Activated naive CD4-positive, alpha-beta T cell treated with anti-CD3 and anti-CD28 coated beads, Interleukin-2, amount 10 ng/mL, durations not matched to agents 7 days and 5 days (primary cell): ENCODE measurements at regions of chr1 and their contacts with region 1.

Region 1: DNA sequence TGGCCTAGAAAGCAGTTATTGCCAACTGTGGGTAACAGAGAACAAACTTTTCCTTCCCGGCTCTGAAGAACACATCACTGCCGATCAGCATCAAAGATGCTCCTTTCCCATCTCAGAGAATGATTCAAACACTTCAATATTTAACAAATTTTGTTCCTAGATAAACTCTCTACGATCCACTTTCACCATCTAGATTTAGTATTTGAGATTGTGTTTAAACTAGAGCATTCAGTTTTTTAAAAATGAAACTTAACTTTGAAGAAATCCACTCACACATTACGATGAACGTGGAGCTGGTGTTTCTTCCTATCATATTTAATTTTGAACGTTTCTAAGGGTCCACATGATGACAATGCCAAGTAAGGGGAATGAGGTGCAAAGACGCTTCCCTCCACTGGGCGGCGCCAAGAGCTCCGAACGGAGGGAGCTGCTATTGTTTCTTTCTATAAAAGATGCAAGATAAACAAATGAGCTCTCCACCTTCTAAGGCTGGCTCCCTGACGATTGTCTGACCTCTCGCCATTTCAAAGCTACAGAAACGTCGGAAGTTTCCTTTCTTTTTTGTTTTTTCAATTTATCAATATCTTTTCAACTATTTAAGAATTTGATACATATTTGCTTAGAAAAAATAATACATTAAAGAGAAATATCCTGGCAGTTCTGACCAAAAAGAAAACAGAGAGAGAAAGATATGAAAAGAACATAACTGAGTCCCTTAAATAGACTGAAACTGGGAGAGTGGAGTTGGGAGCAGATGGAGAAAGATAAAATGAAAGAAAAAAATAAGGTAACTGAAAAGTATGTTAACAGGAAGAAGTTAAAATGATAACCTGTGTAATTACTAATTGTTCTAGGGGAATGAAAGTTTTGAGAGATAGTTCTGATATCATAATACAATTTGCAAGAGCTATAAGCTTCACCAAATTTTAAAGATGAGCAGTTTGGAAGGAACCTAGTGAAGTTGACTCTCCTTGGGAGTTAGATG is 4.4 kb upstream of the BARHL2 start:
- DNase-seq: peak; percentile 70
- H3K4me3 Mint-ChIP-seq: peak overlapping the region; percentile 7
- H3K27ac Mint-ChIP-seq: peak overlapping the region; percentile 20
- H3K4me1 Mint-ChIP-seq: peaks cover 38% of the 10 kb centered on the region
- H3K27me3 Mint-ChIP-seq: peaks cover 99% of the 10 kb centered on the region

Region 2: GRCh38 chr1:90694846-90695245 is 26.7 kb before region 1 on chr1:
- CTCF ChIA-PET with region 1: no interaction called
- DNase-seq: no peak
- H3K4me3 Mint-ChIP-seq: no peak overlapping the region
- H3K27ac Mint-ChIP-seq: no peak overlapping the region
- H3K4me1 Mint-ChIP-seq: no peaks in the 10 kb centered on the region
- H3K27me3 Mint-ChIP-seq: peaks cover 9% of the 10 kb centered on the region

Region 3: DNA sequence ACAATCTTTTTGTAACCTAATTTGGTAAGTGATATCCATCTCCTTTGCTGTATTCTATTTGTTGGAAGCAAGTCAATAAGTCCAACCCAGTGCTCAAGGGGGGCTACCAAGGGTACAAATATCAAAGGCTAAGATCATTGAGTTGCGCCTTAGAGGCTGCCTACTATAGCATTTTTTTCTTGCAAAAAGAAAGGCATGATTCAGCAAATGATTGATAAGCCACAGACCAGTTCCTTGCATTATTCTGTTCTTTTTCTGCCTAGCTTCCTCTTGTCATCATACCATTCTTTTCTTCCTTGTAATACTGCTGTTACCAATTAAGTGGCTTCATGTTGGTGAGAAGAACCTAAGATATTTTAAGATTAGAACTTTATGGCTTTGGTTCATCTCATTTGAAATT is 25.4 kb after region 1 on chr1:
- CTCF ChIA-PET with region 1: no interaction called
- DNase-seq: no peak
- H3K4me3 Mint-ChIP-seq: no peak overlapping the region
- H3K27ac Mint-ChIP-seq: no peak overlapping the region
- H3K4me1 Mint-ChIP-seq: no peaks in the 10 kb centered on the region
- H3K27me3 Mint-ChIP-seq: peaks cover 21% of the 10 kb centered on the region

Region 4: DNA sequence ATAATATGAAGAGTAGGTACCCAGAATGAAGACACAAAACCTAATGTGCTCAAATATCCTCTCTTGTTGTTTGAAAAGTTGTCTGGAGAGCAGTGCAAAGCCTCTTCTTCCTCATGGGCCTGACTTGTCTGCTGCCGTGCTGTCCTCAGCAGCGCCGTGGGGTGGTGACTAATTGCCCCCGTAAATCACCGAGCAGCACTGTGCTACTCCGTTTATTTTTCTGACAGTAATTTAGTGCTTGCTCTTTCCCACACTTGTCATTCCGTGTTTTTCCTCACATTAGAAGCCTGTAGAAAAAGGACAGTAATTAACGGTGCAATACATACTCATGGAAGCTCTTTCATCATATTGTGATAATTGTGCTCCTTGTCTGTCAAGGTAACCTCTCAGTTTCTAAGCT is 110.4 kb after region 1 on chr1:
- CTCF ChIA-PET with region 1: interaction called, 10 read pairs
- DNase-seq: no peak
- H3K4me3 Mint-ChIP-seq: no peak overlapping the region
- H3K27ac Mint-ChIP-seq: no peak overlapping the region
- H3K4me1 Mint-ChIP-seq: peaks cover 7% of the 10 kb centered on the region
- H3K27me3 Mint-ChIP-seq: peaks cover 65% of the 10 kb centered on the region